Heart left ventricle (tissue), 16 donors: ENCODE measurements at regions of chr17 and their contacts with region 1.

Region 1: GRCh38 chr17:42577532-42578281 is at the start of gene PSMC3IP:
- DNase-seq: peak; percentile 96 to 97 (median 96)
- ATAC-seq: peak; percentile 91 to 98 (median 94)
- H3K4me3 ChIP-seq: peak within 1 kb of the TSS; percentile 49 to 96 (median 66)
- H3K27ac ChIP-seq: peak within 1 kb of the TSS; percentile 83 to 99 (median 90)
- H3K4me1 ChIP-seq: peaks cover 0 to 32% (median 14%) of the 10 kb centered on the region in 12 donors
- H3K27me3 ChIP-seq: no peaks in the 10 kb centered on the region
- CTCF ChIP-seq: peak in 9 of 12 donors; percentile 9 to 55 (median 40)
- POLR2A ChIP-seq: peak; percentile 54 to 86
- total RNA-seq, gene PSMC3IP: 0.71 to 4.1 (median 2.0) TPM

Region 2: DNA sequence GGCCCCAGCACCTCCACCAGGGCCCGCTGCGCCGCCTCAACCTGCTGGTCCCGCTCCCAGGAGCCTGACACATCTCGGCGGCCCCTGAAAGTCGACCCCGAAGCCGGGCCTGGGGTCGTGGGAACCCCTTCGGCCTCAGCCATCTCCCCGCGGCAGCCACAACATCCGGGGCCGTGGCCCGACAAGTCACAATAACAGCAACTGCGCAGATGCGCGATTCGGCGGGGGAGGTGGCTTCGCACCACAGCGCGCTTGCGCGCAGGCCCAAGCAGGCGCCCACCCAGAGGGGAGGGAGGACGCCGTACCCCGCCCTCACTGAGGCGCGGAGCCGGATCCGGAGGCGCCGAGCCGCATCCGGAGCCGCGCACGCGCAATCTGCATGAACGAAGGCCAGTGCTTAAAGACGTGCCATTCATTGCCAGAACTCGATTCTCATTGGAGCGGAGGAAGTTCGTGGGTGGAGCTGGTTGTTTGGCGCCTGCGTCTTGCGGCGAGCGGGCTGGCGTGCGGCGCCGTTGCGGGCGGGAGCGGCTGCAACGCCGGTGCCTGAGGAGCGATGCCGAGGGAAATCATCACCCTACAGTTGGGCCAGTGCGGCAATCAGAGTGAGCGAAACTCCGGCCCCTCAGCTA is 31.6 kb after region 1 on chr17 and contains the starts of genes RETREG3 and TUBG1:
- intact Hi-C with region 1: loop called in 2 of 10 experiments (anchors 1 to 2 kb)
- DNase-seq: peak; percentile 99 to 100 (median 99)
- ATAC-seq: peak; percentile 97 to 99 (median 98)
- H3K4me3 ChIP-seq: peak within 1 kb of the TSS; percentile 62 to 96 (median 88)
- H3K27ac ChIP-seq: peak within 1 kb of the TSS; percentile 82 to 97 (median 94)
- H3K4me1 ChIP-seq: peaks cover 3 to 48% (median 36%) of the 10 kb centered on the region in 12 donors
- H3K27me3 ChIP-seq: no peaks in the 10 kb centered on the region
- CTCF ChIP-seq: peak in 7 of 12 donors; percentile 17 to 51 (median 35)
- POLR2A ChIP-seq: peak; percentile 18 to 93
- total RNA-seq, gene RETREG3: 21.3 to 39.0 (median 28.3) TPM
- total RNA-seq, gene TUBG1: 31.5 to 80.1 (median 49.3) TPM

Region 3: DNA sequence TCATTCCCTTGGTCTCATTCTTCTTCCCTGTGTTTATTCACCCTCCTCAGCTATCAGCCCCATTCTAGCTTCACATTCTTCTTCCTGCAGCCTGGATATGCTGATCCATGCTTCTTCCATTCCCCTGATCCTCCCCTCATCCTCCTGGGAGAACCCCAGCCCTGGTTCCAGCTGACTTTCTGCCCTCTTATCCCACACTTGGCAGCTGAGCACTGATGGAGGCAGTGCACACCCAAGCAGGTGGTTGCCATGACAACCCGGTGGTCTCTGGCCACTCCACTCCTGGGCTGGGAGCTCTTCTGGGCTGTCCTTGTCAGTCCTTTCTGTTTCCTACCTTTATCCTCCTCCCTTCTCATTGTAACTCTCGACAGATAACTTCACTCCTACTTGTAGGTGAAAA is 64.6 kb after region 1 on chr17:
- intact Hi-C with region 1: no loop called
- DNase-seq: no peak
- ATAC-seq: no peak
- H3K4me3 ChIP-seq: no peak overlapping the region
- H3K27ac ChIP-seq: no peak overlapping the region
- H3K4me1 ChIP-seq: no peaks in the 10 kb centered on the region
- H3K27me3 ChIP-seq: no peaks in the 10 kb centered on the region
- CTCF ChIP-seq: no peak
- POLR2A ChIP-seq: no peak

Region 4: DNA sequence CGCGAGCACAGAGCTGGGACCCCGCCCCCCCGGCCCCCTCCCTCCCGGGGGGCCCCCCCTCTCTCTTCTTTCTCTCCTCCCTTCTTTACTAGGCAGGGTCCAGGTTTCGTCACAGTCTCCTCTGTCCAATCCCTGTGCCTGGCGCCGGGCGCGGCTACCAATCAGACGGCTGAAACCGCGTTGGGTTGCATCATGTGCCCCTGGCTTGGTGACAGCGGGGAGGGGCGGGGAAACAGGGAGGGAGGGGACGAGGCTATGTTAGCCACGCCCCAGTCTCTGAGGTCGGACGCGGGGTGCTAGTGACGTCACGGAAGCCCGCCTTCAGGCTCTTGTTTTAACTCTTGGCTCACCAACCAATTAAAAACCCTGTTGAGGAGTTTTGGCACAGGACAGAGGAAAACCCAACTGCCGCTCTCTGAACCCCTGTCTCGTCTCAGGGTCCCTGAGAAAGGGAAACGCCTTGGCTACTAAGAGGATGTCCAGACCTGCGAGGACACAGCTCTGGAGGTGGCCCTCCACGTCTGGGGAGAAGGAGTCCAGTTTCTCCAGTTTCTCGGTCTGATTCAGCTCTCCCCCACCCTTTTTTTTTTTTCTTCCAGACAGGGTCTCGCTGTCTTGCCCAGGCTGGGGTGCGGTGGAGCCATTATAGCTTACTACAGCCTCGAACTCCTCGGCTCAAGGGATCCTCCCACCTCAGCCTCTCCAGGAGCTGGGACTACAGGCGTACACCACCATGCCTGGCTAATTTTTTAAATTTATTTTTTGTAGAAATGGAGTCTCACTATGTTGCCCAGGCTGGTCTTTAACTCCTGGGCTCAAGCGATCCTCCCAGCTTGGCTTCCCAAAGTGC is 99.5 kb after region 1 on chr17:
- intact Hi-C with region 1: loop called in 9 of 10 experiments (anchors 1 to 10 kb)
- DNase-seq: peak; percentile 100
- ATAC-seq: peak; percentile 70 to 87 (median 82)
- H3K4me3 ChIP-seq: peak overlapping the region; percentile 79 to 97 (median 92)
- H3K27ac ChIP-seq: peak overlapping the region; percentile 66 to 99 (median 96)
- H3K4me1 ChIP-seq: peaks cover 2 to 81% (median 65%) of the 10 kb centered on the region in 12 donors
- H3K27me3 ChIP-seq: peaks cover 0 to 35% (median 0%) of the 10 kb centered on the region in 9 donors
- CTCF ChIP-seq: no peak
- POLR2A ChIP-seq: no peak

Region 5: GRCh38 chr17:42760652-42761581 is 183.2 kb after region 1 on chr17 and contains the start of gene RAMP2:
- intact Hi-C with region 1: loop called in 6 of 10 experiments (anchors 5 to 10 kb)
- DNase-seq: peak in 3 of 5 donors; percentile 58 to 63 (median 60)
- ATAC-seq: peak in 3 of 4 donors; percentile 12 to 56 (median 52)
- H3K4me3 ChIP-seq: peak within 1 kb of the TSS; percentile 44 to 92 (median 70)
- H3K27ac ChIP-seq: peak within 1 kb of the TSS; percentile 78 to 98 (median 90)
- H3K4me1 ChIP-seq: peaks cover 3 to 36% (median 16%) of the 10 kb centered on the region in 12 donors
- H3K27me3 ChIP-seq: peaks cover 0 to 27% (median 2%) of the 10 kb centered on the region in 9 donors
- CTCF ChIP-seq: no peak
- POLR2A ChIP-seq: peak in 1 of 2 donors; percentile 45
- total RNA-seq, gene RAMP2: 31.2 to 58.3 (median 39.7) TPM

Region 6: DNA sequence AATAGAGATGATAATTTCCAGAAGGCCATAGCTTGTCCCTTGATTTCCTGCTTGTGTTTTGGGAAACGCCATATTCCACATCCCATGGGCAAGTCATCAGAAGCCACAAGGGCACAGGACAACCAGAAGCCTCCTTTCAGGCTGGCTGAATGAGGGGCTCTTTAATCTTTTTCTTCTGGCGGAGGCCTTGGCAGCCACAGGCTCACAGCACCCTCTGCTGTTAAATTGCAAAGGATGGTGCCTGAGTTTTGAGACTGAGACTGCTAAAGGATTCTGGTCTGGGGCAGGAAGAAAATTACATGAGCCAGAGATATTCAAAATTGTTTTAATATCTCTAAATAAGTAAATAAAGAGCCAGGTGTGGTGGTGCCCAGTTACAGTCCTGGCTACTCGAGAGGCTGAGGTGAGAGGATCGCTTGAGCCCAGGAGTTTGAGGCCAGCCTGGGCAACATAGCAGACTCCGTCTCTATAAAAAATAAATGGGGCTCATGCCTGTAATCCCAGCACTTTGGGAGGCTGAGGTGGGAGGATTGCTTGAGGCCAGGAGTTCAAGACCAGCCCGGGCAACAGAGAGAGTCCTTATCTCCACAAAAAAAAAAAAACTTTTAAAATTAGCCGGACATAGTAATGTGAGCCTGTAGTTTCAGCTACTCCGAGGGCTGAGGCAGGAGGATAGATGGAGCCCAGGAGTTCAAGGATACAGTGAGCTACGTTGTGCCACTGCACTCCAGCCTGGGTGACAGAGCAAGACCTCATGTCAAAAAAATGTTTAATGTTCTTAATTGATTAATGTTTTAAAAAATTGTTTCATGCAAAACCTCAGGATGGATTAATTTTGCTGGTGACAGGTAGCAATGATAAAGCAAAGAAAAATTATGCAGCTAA is 360.2 kb after region 1 on chr17:
- intact Hi-C with region 1: loop called in 1 of 10 experiments (anchors 5 kb)
- DNase-seq: peak in 4 of 5 donors; percentile 33 to 38 (median 36)
- ATAC-seq: peak; percentile 58 to 83 (median 74)
- H3K4me3 ChIP-seq: no peak overlapping the region
- H3K27ac ChIP-seq: no peak overlapping the region
- H3K4me1 ChIP-seq: no peaks in the 10 kb centered on the region
- H3K27me3 ChIP-seq: peaks cover 0 to 4% (median 0%) of the 10 kb centered on the region in 9 donors
- CTCF ChIP-seq: peak; percentile 52 to 80 (median 66)
- POLR2A ChIP-seq: no peak